ENCODE measurements at regions of chr2 and their contacts with region 1.

Region 1: DNA sequence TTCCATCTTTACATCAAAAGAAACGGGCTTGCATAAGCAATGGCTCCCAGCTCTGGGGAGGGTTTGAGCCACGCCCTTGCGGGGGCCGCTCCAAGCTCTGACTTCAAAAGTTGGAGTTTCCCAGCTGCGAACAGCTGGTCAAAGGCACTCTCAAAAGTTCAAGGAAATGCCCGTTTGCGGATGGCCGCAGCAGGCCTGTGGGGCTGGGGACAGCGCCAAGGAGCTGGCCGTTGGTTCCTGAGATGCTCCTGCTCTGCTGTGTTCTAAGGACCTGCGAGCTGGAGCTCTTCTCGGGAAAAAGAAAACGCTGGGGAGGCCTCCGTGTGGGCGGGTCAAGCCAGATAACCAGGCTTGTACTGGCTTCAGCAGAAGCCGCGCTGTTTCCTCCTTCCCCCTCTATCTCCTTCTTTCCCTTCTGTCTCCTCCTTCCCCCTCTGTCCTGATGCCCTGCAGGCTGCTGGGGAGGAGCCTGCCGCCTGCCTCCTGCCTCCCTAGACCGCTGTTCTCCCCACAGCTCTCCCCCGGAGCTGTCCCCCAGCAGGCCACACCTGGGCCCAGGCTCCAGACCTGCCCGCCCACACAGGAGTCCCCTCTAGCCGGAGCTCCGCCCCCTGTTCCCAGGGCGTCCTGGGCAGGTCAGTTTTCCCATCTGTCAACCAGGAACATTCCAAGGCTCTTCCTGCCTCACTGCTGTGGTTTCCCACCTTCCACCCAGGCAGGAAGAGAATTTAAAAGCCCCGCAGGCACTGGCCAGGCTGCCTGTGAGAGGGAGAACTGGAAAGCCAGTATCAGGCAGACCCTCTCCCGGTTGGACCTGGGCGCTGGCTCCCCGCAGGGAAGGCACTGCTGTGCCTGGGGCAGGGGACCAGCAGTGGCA is 14.1 kb downstream of the KLF11 start:
- DNase-seq: no peak
- CTCF ChIP-seq: no peak

Region 2: GRCh38 chr2:9638532-9638931 is 418.9 kb before region 1 on chr2:
- in situ Hi-C with region 1: no loop called
- DNase-seq: no peak
- CTCF ChIP-seq: no peak

Region 3: DNA sequence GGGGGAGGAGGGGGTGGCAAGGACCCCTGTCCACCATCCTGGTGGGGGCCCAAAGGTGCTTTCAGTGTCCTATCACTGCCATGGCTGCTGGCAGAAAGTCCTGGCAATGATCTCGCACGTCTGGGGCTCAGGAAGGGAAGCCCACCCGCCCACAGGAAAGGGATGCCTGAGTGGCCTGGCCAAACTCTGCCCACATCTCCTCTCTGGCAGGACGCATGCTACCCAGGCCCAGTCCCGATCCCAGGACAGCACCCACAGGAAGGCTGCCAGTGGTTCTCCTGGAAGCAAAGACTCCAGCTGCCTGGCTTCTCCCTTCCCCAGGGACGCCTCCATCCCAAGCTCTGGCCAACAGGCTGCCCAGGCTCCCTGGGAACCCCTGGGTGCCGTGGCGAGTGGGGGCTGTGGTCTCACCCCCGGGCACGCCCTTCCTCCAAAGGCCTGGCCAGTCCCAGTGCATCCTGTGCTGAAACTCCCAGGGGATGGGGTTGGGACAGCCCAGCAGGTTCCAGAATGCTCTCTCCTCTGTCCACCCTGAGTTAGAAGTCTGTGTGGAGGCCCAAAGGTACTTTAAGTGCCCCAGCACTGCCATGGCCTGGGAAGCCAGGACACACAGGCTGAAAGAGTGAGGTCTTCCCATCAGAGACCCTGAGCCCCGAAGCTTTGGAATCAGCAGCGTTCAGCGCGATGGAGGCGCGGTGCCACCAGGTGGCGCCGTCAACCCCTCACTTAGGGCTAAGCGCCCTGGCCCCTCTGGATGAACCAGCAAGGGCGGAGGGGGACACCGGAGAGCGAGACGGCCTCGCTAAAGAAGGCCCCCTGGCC is 243.9 kb before region 1 on chr2:
- in situ Hi-C with region 1: loop called (anchors 10 kb)
- DNase-seq: peak; percentile 88
- CTCF ChIP-seq: peak; percentile 97